ENCODE measurements at regions of chr9 and their contacts with region 1.

Region 1: GRCh38 chr9:87223392-87224246 is 274.0 kb upstream of the DAPK1 start:
- DNase-seq: no peak
- ATAC-seq: no peak
- H3K4me3 Mint-ChIP-seq: no peak overlapping the region
- H3K27ac Mint-ChIP-seq: no peak overlapping the region
- H3K4me1 Mint-ChIP-seq: no peaks in the 10 kb centered on the region
- H3K27me3 Mint-ChIP-seq: no peaks in the 10 kb centered on the region
- CTCF ChIP-seq: no peak

Region 2: DNA sequence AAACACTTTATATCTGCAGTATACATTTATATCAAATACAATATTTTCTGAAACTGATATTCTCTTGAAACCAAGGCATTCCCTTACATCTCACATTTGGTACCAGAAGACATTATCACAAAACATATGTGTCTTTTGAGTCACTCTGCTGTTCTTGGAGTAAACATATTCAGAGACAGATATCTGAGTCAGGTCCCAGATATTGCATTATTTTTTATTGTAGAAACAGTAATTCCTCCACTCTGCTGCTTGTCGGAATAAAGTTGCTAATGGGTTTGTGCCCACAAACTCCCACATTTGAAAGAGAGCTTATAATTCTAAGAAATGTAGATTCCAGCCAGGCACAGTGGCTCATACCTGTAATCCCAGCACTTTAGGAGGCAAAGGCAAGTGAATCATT is 12.9 kb after region 1 on chr9:
- CTCF ChIA-PET with region 1: no interaction called
- POLR2A ChIA-PET with region 1: no interaction called
- intact Hi-C with region 1: loop called (anchors 1 kb)
- DNase-seq: no peak
- ATAC-seq: no peak
- H3K4me3 Mint-ChIP-seq: no peak overlapping the region
- H3K27ac Mint-ChIP-seq: no peak overlapping the region
- H3K4me1 Mint-ChIP-seq: no peaks in the 10 kb centered on the region
- H3K27me3 Mint-ChIP-seq: no peaks in the 10 kb centered on the region
- CTCF ChIP-seq: no peak

Measured in activated B cell treated with CpG ODN at 0.5 μM for 24 hours (primary cell).